Endothelial cell of umbilical vein (primary cell): ENCODE measurements at regions of chr14 and their contacts with region 1.

Region 1: DNA sequence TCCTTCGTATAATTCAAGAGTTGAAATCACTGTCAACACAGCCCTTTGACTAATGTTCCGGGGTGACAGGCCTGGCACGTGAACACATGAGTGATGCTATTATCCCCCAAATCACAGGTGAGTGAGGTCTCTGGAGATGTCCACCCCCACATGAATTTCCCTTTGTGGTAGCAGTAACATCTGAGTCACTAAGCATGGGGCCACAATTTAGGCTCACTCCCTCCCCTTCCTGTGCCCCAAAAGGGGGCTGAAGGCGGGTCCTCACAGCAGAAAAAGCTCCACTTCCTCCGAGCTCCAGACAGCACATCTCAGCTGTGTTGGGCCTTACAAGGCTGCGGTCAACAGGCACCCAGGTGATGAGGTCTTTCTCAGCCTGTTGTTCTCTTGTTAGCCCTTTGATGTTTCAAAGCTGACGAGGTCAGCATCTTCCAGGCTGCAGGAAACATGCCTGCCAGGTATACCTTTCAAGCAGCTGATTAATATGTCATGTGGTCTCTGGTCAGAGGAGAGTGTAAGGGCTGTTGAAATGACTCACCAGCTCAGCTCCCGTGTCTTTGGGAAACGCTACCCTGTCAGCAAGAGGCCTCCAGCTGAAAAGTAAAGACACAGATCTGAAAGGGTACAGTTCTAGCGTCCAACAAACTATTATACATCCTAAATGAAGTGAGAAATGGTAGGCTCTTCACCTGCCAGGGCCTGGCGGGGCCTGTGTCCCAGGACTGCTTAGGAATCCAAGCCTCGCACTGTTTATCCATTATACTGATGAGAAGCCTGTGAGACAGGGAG is 107.3 kb downstream of the ZFP36L1 start:
- DNase-seq: no peak
- H3K4me3 ChIP-seq: no peak overlapping the region
- H3K27ac ChIP-seq: no peak overlapping the region
- H3K4me1 ChIP-seq: peaks cover 43% of the 10 kb centered on the region
- H3K27me3 ChIP-seq: no peaks in the 10 kb centered on the region
- CTCF ChIP-seq: no peak
- POLR2A ChIP-seq: no peak

Region 2: DNA sequence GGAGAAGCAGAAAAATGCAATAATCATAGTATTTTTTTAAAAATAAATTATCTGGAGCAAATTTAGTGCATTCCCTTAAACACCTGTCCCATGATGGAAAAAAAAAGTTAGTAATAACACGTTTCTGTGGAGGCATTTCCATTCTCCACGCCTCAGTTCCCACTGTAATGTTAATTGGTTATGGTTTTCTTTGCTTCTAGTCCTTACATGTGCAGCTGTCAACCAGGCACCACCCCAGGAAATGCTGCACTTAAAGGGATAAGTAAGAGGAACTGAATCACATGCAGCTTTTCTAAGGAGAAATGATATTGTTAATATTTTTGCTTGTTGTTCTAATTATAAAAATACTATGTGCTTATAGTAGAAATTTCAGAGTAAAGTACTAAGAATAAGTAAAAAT is 133.0 kb before region 1 on chr14:
- CTCF ChIA-PET with region 1: no interaction called
- POLR2A ChIA-PET with region 1: no interaction called
- dilution Hi-C with region 1: no loop called
- intact Hi-C with region 1: loop called (anchors 2 kb)
- DNase-seq: peak; percentile 72
- H3K4me3 ChIP-seq: no peak overlapping the region
- H3K27ac ChIP-seq: peak overlapping the region; percentile 71
- H3K4me1 ChIP-seq: peaks cover 70% of the 10 kb centered on the region
- H3K27me3 ChIP-seq: no peaks in the 10 kb centered on the region
- CTCF ChIP-seq: no peak
- POLR2A ChIP-seq: peak; percentile 7

Region 3: GRCh38 chr14:68598621-68599447 is 86.8 kb before region 1 on chr14:
- CTCF ChIA-PET with region 1: interaction called, 5 read pairs
- POLR2A ChIA-PET with region 1: no interaction called
- dilution Hi-C with region 1: no loop called
- intact Hi-C with region 1: loop called (anchors 1 kb)
- DNase-seq: peak; percentile 97
- H3K4me3 ChIP-seq: no peak overlapping the region
- H3K27ac ChIP-seq: peak overlapping the region; percentile 82
- H3K4me1 ChIP-seq: peaks cover 24% of the 10 kb centered on the region
- H3K27me3 ChIP-seq: no peaks in the 10 kb centered on the region
- CTCF ChIP-seq: no peak
- POLR2A ChIP-seq: peak; percentile 55

Region 4: DNA sequence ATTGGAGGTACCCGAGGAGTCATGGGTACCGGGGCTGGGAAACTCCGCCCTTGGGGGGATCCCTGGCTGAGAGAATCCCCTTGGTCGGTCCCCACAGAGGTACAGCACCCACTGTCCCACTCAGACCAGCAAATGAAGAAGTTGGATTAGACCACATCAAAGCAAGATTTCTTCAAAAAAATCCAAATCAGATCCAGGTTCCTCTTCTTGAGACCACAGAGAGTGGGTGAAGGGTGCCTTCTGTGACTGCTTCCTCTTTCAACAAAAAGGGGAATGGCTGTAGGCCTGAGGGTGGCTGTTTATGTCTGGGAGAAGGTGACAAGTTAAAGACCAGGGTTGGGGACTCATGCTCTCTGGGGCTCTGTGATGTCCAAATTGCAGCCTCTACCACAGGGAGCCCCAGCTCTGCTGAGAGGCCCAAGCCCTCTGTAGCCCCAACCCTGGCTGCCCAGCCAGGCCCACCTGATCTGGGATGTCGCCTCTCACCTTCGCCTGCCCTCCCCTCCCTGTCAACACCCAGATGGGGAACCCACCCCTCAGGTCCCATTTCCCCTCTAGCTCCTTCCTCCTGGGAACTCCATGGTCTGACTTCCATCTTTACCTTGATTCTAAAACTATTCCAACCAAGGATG is 56.3 kb after region 1 on chr14:
- CTCF ChIA-PET with region 1: no interaction called
- POLR2A ChIA-PET with region 1: no interaction called
- dilution Hi-C with region 1: no loop called
- intact Hi-C with region 1: no loop called
- DNase-seq: no peak
- H3K4me3 ChIP-seq: no peak overlapping the region
- H3K27ac ChIP-seq: no peak overlapping the region
- H3K4me1 ChIP-seq: no peaks in the 10 kb centered on the region
- H3K27me3 ChIP-seq: no peaks in the 10 kb centered on the region
- CTCF ChIP-seq: no peak
- POLR2A ChIP-seq: no peak

Region 5: GRCh38 chr14:68753690-68754089 is 68.1 kb after region 1 on chr14:
- CTCF ChIA-PET with region 1: no interaction called
- POLR2A ChIA-PET with region 1: no interaction called
- dilution Hi-C with region 1: no loop called
- intact Hi-C with region 1: no loop called
- DNase-seq: no peak
- H3K4me3 ChIP-seq: no peak overlapping the region
- H3K27ac ChIP-seq: no peak overlapping the region
- H3K4me1 ChIP-seq: peaks cover 8% of the 10 kb centered on the region
- H3K27me3 ChIP-seq: no peaks in the 10 kb centered on the region
- CTCF ChIP-seq: no peak
- POLR2A ChIP-seq: no peak

Region 6: GRCh38 chr14:68771607-68772006 is 86.0 kb after region 1 on chr14:
- CTCF ChIA-PET with region 1: interaction called, 3 read pairs
- POLR2A ChIA-PET with region 1: no interaction called
- dilution Hi-C with region 1: no loop called
- intact Hi-C with region 1: loop called (anchors 5 kb)
- DNase-seq: peak; percentile 90
- H3K4me3 ChIP-seq: no peak overlapping the region
- H3K27ac ChIP-seq: peak overlapping the region; percentile 59
- H3K4me1 ChIP-seq: peaks cover 21% of the 10 kb centered on the region
- H3K27me3 ChIP-seq: no peaks in the 10 kb centered on the region
- CTCF ChIP-seq: no peak
- POLR2A ChIP-seq: peak; percentile 27